GM12878 (cell line): ENCODE measurements at regions of chrX and their contacts with region 1.

Region 1: DNA sequence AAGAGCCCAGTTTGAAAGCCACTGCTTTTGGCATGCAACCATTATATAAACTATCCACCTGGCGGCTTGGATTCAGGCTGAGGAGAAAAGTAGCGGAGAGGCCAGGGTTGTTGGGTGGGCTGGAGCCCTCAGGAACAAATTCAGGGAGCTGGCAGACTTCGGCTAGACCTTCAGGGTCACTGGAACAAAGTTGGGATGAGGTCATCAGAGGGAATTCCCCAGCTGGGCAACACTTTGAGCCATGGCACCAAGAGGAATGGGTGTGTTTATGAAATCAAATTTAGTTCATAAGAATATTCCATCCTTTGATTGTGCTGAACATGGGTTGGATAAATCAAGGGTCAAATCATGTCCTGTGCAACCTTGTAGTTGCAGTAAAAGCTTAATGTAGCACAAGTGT is 22.0 kb downstream of the MTMR1 start:
- DNase-seq: no peak
- ATAC-seq: no peak
- H3K4me3 ChIP-seq: no peak overlapping the region
- H3K27ac ChIP-seq: no peak overlapping the region
- H3K4me1 ChIP-seq: 0 out of 2 replicates have a peak, but pooled peaks cover 3% of the 10 kb centered on the region
- H3K27me3 ChIP-seq: no peaks in the 10 kb centered on the region
- CTCF ChIP-seq: no peak
- EP300 ChIP-seq: no peak
- POLR2A ChIP-seq: no peak
- RAD21 ChIP-seq: no peak

Region 2: DNA sequence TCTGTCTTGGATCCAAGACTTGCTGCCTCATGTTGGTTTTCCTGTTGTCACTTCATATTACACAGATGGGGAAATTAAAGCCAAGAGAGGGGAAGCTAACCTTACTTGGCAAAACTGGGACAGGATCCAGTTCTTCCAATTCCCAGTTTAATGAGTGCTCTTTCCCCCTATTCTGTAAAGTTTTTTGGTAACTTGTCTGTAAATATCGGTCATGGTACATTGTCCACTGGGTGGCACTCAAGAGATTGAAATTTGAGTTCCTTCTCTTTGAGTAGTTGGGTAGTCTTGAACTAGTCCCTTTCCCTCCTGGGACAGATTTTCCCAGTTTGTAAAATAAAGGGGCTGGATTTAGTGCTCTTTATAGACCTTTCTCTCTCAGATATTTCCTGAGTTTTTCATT is 764.5 kb before region 1 on chrX:
- CTCF ChIA-PET with region 1: interaction called, 3 read pairs
- POLR2A ChIA-PET with region 1: no interaction called
- RAD21 ChIA-PET with region 1: no interaction called
- SMC1A ChIA-PET with region 1: no interaction called
- in situ Hi-C with region 1: loop called (anchors 10 kb)
- intact Hi-C with region 1: no loop called
- DNase-seq: no peak
- ATAC-seq: peak; percentile 53; the same call in 2 of the 3 replicates
- H3K4me3 ChIP-seq: no peak overlapping the region
- H3K27ac ChIP-seq: no peak overlapping the region
- H3K4me1 ChIP-seq: no peaks in the 10 kb centered on the region
- H3K27me3 ChIP-seq: no peaks in the 10 kb centered on the region
- CTCF ChIP-seq: peak; percentile 39 to 46 (median 39)
- EP300 ChIP-seq: no peak
- POLR2A ChIP-seq: no peak
- RAD21 ChIP-seq: peak; percentile 52

Region 3: DNA sequence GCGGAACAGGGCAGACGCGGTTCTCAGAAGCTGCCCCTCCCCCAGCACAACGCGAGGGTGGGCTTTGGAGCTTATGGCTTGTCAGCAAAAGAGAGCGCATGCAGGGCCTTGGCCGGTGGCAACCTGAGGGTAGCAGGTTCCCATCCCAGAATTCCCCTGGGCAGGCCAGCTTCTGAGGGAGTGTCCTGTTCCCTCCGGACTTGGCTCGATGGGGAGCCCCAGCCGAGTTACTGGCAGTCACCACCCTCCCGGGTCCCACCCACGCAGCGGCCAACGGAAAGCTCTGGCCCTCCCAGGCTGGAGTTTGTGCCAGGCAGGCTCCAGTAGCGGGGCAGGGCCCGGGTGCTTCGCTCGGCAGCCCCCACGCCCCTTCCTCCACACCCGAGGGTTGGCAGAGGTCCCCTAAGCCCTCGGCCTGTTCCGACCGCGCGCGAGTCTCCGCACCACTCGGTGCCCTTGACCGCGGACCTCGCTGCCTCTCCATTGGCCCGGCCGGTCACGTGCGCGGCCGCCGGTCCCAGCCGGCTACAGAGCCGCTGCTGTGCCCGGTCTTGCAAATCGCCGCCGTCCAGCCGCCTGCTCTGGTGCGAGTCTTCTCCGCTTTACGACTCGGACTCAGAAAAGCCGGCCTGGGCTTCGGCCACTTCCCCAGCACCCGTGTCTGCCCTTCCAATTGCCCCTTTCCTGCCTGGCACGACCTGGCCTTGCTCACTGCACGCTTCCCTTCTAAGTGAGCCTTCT is 167.6 kb before region 1 on chrX:
- CTCF ChIA-PET with region 1: interaction called, 4 read pairs
- POLR2A ChIA-PET with region 1: no interaction called
- RAD21 ChIA-PET with region 1: no interaction called
- SMC1A ChIA-PET with region 1: interaction called, 3 read pairs
- in situ Hi-C with region 1: no loop called
- intact Hi-C with region 1: loop called (anchors 10 kb)
- DNase-seq: no peak
- ATAC-seq: peak; percentile 66
- H3K4me3 ChIP-seq: no peak overlapping the region; the same call in 1 of the 2 replicates
- H3K27ac ChIP-seq: no peak overlapping the region
- H3K4me1 ChIP-seq: peaks cover 7% of the 10 kb centered on the region; the same call in 1 of the 2 replicates
- H3K27me3 ChIP-seq: no peaks in the 10 kb centered on the region; a peak in 2 of 4 replicates
- CTCF ChIP-seq: no peak
- EP300 ChIP-seq: no peak
- POLR2A ChIP-seq: no peak
- RAD21 ChIP-seq: no peak

Region 4: DNA sequence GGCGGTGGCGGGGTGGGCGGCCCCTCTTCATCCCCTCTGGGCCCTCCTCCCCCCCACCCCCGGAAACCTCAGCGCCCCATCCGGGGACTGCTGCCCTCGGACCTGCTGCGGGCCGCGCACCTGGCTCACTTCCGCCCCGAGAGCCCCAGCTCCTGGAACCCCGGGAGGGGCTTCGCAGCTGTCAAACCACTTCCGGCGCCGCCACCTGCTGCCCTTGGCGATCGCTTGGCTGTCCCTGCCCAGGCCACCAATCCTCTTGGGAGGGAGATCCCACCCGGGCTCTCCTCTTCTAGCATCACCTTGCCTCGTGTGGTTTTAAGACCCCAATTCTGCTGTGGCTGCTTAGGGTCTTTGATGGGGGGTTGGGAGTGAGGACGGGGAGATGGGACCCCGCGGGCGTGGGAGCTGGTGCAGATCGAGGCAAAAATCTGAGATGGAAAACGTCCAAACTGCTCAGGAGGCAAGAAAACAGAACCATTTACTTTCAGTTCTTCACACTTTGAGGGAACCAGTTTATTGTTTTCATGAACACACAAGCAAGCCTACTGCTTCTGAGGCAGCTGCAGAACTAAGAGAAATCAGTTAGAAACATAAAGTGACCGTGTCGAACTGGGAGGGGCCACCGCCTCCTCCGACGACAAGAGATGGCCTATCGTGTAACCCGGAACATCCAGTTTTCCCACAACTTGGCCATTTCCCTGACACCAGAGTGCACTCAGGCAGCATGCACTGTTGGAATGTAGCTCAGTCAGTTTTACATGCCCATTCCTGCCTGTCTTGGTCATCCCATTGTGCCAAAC is 21.2 kb before region 1 on chrX:
- CTCF ChIA-PET with region 1: interaction called, 106 read pairs
- POLR2A ChIA-PET with region 1: interaction called, 5 read pairs
- RAD21 ChIA-PET with region 1: interaction called, 16 read pairs
- SMC1A ChIA-PET with region 1: interaction called, 26 read pairs
- in situ Hi-C with region 1: no loop called
- intact Hi-C with region 1: no loop called
- DNase-seq: no peak
- ATAC-seq: peak; percentile 74
- H3K4me3 ChIP-seq: peak overlapping the region; percentile 62
- H3K27ac ChIP-seq: peak overlapping the region; percentile 90
- H3K4me1 ChIP-seq: peaks cover 13% of the 10 kb centered on the region
- H3K27me3 ChIP-seq: no peaks in the 10 kb centered on the region
- CTCF ChIP-seq: no peak
- EP300 ChIP-seq: no peak
- POLR2A ChIP-seq: no peak
- RAD21 ChIP-seq: no peak

Region 5: DNA sequence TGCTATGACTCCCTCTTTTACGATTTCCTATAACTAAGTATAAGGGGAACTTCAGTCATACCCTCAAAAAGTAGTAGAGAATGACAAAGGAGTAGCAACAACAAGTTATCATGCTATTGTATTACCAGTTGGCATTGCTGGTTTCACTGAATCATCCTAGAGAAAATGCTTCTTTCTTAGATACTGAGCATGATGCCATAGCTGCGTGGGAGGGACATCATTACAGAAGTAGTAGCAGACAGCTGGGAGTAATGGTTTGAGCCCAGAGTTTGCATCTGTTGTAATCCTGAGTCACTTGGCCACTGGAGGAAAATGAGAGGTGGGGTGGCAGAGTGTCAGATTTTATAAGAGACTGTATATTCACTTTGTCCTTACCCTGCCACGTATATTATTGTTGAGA is 16.6 kb after region 1 on chrX:
- CTCF ChIA-PET with region 1: interaction called, 21 read pairs
- POLR2A ChIA-PET with region 1: no interaction called
- RAD21 ChIA-PET with region 1: no interaction called
- SMC1A ChIA-PET with region 1: interaction called, 3 read pairs
- in situ Hi-C with region 1: no loop called
- intact Hi-C with region 1: no loop called
- DNase-seq: no peak
- ATAC-seq: no peak
- H3K4me3 ChIP-seq: no peak overlapping the region
- H3K27ac ChIP-seq: no peak overlapping the region
- H3K4me1 ChIP-seq: no peaks in the 10 kb centered on the region
- H3K27me3 ChIP-seq: no peaks in the 10 kb centered on the region
- CTCF ChIP-seq: no peak
- EP300 ChIP-seq: no peak
- POLR2A ChIP-seq: no peak
- RAD21 ChIP-seq: no peak

Region 6: DNA sequence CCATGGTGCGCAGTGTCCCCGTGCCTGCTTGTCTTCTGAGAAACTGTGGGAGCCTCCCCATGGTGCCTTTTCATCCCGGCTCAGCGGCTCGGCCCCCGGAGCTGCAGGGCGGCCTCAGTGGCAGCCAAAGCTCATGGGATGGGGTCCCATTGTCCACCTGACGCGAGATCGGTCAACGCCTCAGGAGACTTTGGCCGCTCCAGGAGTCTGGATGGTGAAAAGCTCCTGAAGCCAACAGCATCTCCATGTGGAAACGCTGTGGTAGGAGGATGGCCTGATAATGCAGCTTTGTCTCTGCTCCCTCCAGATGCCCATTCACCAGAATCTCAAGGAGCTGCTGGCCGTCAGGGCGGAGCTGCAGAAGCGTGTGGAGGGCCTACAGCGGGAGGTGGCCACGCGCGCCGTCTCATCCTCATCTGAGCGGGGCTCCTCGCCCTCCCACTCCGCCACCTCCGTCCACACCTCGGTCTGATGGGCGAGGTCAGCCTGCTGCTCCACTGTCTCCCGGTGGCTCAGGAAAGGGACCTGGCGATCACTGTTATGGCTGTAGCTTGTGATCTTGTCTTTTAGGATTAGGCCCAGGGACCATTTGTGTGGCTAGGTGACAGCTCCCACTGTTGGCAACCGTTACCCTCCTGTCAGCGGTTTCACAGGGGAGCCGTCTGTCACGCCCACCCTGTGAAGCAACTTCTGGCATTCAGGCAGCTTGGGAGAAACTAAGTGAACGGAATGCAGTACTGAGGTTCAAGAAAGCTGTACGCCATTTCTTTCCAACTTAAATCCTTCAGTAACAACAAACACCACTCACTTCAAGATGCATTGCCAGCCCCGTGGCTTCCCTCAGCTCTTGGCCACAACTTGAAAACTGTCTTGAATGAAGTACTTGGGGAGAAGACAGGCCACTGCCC is 47.3 kb after region 1 on chrX:
- CTCF ChIA-PET with region 1: no interaction called
- POLR2A ChIA-PET with region 1: no interaction called
- RAD21 ChIA-PET with region 1: no interaction called
- SMC1A ChIA-PET with region 1: no interaction called
- in situ Hi-C with region 1: no loop called
- intact Hi-C with region 1: no loop called
- DNase-seq: no peak
- ATAC-seq: no peak
- H3K4me3 ChIP-seq: no peak overlapping the region
- H3K27ac ChIP-seq: no peak overlapping the region
- H3K4me1 ChIP-seq: no peaks in the 10 kb centered on the region
- H3K27me3 ChIP-seq: no peaks in the 10 kb centered on the region
- CTCF ChIP-seq: no peak
- EP300 ChIP-seq: no peak
- POLR2A ChIP-seq: no peak
- RAD21 ChIP-seq: no peak